ENCODE measurements at regions of chr6 and their contacts with region 1.

Region 1: DNA sequence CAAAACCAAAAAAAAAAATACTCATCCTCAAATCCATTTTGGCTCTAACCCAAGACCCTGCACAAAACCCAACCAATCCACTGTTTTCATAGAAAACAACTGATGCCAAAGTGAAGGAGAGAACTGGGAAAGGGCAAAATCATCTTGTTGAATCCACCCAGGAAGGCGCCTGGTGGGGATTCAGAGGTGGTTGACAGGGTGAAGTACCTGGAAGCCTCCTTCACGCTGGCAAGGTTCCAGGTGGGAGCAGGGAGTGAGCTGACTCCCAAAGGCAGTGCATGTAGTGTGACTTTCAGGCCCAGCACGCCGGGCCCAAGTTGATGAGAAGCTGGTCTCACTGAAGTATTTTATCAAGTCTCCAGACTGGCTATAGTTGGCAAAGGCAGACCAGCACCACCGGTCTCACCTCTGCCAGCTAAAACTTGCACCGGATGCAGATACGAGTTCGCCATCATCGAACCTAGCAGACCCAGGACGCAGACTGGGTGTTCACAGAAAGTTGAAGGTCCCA is 16.5 kb downstream of the PPP1R10 start:
- H3K4me3 ChIP-seq: no peak overlapping the region
- H3K27ac ChIP-seq: peak overlapping the region; percentile 40; the same call in 1 of the 2 replicates
- H3K4me1 ChIP-seq: no peaks in the 10 kb centered on the region
- CTCF ChIP-seq: no peak

Region 2: GRCh38 chr6:30578051-30578450 is 22.5 kb before region 1 on chr6:
- CTCF ChIA-PET with region 1: interaction called, 17 read pairs
- POLR2A ChIA-PET with region 1: interaction called, 4 read pairs
- H3K4me3 ChIP-seq: no peak overlapping the region
- H3K27ac ChIP-seq: no peak overlapping the region
- H3K4me1 ChIP-seq: peaks cover 5% of the 10 kb centered on the region; the same call in 1 of the 2 replicates
- CTCF ChIP-seq: no peak

Region 3: DNA sequence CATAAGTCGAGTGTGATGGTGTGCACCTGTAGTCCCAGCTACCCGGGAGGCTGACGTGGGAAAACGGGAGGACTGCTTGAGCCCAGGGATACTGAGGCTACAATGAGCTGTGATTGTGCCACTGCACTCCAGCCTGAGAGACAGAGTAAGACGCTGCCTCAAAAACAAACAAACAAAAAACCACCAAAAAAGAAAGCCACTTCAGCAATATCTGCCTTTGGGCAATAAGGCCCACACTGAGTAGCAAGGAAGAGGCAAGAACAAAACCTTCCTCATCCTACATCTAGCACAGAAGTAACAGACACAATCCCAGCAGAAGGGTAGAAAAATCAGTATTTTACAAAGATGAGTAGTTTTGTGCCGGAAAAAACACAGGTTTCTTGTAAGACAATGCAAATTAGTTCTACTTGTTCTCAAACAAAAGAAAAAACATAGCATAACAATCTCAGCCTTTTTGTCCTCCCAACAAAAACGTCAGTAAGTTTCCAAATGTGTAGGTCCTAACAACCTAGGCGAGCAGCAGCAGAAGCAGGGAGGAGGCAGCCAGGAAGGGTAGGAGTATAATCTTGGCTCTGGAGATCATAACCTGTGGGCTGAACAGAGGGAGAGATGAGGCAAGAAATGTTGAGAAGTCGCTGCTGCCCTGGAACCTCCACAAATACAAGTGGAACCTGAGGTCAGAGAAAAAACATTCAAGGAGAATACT is 10.8 kb after region 1 on chr6:
- CTCF ChIA-PET with region 1: interaction called, 29 read pairs
- POLR2A ChIA-PET with region 1: interaction called, 197 read pairs
- H3K4me3 ChIP-seq: no peak overlapping the region
- H3K27ac ChIP-seq: peak overlapping the region; percentile 10; the same call in 1 of the 2 replicates
- H3K4me1 ChIP-seq: peaks cover 18% of the 10 kb centered on the region
- CTCF ChIP-seq: no peak

Region 4: DNA sequence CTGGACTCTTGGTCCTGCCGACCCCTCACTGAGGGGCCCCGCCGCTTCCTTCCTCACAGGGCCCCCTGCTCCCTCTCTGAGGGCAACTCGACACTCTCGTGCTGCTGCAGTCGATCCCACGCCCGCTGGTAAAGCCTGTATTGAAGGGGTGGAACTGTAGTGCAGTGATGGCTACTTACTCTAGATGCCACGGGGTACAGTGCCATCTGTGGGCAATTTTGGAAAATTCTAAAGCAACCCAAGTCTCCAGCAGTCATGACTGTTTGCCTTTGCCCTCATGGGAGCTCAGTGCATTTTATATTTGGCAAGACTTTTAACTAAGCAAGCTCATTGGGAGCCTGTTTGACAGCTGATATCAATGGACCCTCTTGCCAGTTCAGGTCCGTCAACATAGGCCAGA is 40.0 kb after region 1 on chr6:
- CTCF ChIA-PET with region 1: no interaction called
- POLR2A ChIA-PET with region 1: no interaction called
- H3K4me3 ChIP-seq: no peak overlapping the region
- H3K27ac ChIP-seq: no peak overlapping the region
- H3K4me1 ChIP-seq: no peaks in the 10 kb centered on the region
- CTCF ChIP-seq: no peak

Region 5: DNA sequence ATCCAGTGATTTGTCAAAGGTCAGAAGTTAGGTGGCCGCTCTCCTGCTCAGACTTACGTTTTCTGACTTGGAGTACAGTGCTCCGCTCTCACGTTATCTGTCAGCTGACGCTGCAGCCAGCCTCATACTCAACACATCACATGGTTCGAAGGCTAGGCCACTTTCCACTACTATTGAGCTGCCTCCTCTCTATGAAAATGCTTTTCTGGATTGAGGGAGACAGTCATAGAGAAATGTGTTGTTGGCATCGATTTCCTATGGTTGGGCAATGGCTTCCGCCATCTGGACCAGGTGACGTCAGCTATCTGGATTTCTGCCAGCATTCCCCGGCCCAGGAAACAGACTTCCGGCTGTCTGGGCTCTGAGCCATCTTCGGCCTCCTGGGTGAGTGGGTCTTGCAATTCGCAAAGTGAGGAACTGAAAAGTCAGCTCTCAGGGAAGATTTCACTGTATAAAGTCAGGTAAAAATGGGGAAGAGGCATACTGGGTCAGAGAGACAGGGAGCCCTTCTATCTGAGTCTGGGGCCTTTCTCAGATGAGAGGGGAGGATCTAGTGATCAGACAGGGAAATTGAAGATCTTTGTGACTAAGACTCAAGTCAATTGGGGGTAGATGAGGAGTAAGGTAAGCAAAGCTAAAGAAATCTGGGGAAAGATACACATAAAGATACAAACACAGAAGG is 181.4 kb after region 1 on chr6:
- CTCF ChIA-PET with region 1: no interaction called
- POLR2A ChIA-PET with region 1: no interaction called
- H3K4me3 ChIP-seq: peak overlapping the region; percentile 33
- H3K27ac ChIP-seq: peak overlapping the region; percentile 65
- H3K4me1 ChIP-seq: peaks cover 10% of the 10 kb centered on the region; the same call in 1 of the 2 replicates
- CTCF ChIP-seq: no peak